ENCODE measurements at regions of chr5 and their contacts with region 1.

Region 1: GRCh38 chr5:133910571-133910970 is 57.9 kb downstream of the C5orf15 start:
- DNase-seq: no peak
- ATAC-seq: peak; percentile 87

Region 2: GRCh38 chr5:133952729-133953567 is 42.4 kb after region 1 on chr5:
- intact Hi-C with region 1: loop called (anchors 5 kb)
- DNase-seq: no peak
- ATAC-seq: peak; percentile 86

Region 3: GRCh38 chr5:133992429-133993155 is 82.0 kb after region 1 on chr5:
- intact Hi-C with region 1: loop called (anchors 1 kb)
- DNase-seq: no peak
- ATAC-seq: peak; percentile 67